A549 (cell line): ENCODE measurements at regions of chr10 and their contacts with region 1.

Region 1: GRCh38 chr10:48300556-48300955 is 5.9 kb upstream of the MAPK8 start:
- DNase-seq: no peak
- ATAC-seq: no peak
- H3K4me3 ChIP-seq: no peak overlapping the region
- H3K27ac ChIP-seq: no peak overlapping the region
- H3K4me1 ChIP-seq: no peaks in the 10 kb centered on the region
- CTCF ChIP-seq: no peak
- EP300 ChIP-seq: no peak
- POLR2A ChIP-seq: no peak
- RAD21 ChIP-seq: no peak

Region 2: DNA sequence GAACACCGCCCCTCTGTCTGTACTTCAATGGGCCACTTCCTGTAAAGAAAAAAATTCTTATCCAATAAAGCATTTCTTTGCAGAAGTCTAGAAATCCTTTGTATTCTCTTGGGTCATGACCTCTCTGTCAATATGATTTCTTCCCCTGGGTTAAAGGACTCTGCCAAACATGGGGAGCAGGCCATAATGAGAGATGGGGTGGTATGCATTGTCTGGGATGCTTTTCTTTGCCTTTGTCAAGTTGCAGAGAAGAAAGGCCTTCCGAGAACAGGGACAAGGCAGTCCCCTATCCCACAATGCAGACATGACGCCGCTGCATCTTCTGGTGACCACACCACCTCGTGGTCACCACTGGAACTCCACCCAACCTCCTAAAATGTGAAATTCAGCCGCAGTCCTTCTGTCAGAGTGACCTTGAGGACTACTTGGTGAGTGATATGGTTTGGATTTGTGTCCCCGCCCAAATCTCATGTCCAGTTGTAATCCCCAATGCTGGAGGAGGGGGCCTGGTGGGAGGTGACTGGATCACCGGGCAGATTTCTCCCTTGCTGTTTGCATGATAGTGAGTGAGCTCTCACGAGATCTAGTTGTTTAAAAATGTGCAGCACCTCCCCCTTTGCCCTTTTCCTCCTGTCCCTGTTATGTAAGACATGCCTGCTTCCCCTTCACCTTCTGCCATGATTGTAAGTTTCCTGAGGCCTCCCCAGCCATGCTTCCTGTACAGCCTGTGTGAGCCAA is 10.9 kb before region 1 on chr10:
- CTCF ChIA-PET with region 1: interaction called, 69 read pairs
- POLR2A ChIA-PET with region 1: no interaction called
- DNase-seq: peak; percentile 50 to 68
- ATAC-seq: peak; percentile 85 to 91
- H3K4me3 ChIP-seq: no peak overlapping the region
- H3K27ac ChIP-seq: no peak overlapping the region
- H3K4me1 ChIP-seq: no peaks in the 10 kb centered on the region
- CTCF ChIP-seq: peak; percentile 69
- EP300 ChIP-seq: no peak
- POLR2A ChIP-seq: no peak
- RAD21 ChIP-seq: peak; percentile 60 to 68